Heart left ventricle (tissue), 16 donors: ENCODE measurements at regions of chr6 and their contacts with region 1.

Region 1: GRCh38 chr6:159654483-159655098 is 38.5 kb downstream of the SOD2 start:
- DNase-seq: no peak
- ATAC-seq: peak in 1 of 4 donors; percentile 51
- H3K4me3 ChIP-seq: no peak overlapping the region
- H3K27ac ChIP-seq: no peak overlapping the region
- H3K4me1 ChIP-seq: peaks cover 0 to 5% (median 0%) of the 10 kb centered on the region in 12 donors
- H3K27me3 ChIP-seq: no peaks in the 10 kb centered on the region
- CTCF ChIP-seq: peak; percentile 44 to 73 (median 58)
- POLR2A ChIP-seq: no peak

Region 2: DNA sequence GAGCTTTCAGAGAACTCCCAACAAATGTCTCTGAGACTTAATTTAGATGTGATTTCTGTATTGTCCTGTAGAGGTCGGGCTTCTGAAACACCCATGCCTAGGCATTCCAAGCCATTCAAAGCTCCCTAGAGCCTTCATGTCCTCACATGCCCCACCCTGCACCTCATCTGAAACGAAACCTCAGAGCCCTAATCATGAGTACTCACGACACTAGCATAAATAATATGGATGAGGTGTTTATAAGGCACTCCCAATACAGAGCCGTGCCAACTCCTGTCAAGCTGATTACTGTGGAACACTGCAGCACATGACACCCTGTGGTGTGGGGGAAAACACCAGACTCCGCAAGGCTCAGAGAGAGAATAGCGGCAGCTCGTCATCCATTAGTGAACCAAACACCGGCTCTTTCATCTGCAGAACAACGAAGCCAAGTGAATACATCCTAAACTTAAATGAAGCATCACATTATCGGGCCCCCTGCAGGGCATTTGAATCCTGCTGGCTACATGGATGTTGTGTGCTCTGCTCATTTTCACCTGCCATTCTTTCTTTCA is 401.6 kb before region 1 on chr6:
- intact Hi-C with region 1: loop called in 3 of 10 experiments (anchors 5 to 10 kb)
- DNase-seq: no peak
- ATAC-seq: peak in 3 of 4 donors; percentile 29 to 50 (median 44)
- H3K4me3 ChIP-seq: no peak overlapping the region
- H3K27ac ChIP-seq: no peak overlapping the region
- H3K4me1 ChIP-seq: peaks cover 0 to 13% (median 0%) of the 10 kb centered on the region in 12 donors
- H3K27me3 ChIP-seq: no peaks in the 10 kb centered on the region
- CTCF ChIP-seq: peak in 11 of 12 donors; percentile 29 to 63 (median 49)
- POLR2A ChIP-seq: no peak

Region 3: GRCh38 chr6:159874435-159874834 is 219.8 kb after region 1 on chr6:
- intact Hi-C with region 1: no loop called
- DNase-seq: peak; percentile 51 to 80 (median 57)
- ATAC-seq: peak in 3 of 4 donors; percentile 44 to 71 (median 63)
- H3K4me3 ChIP-seq: no peak overlapping the region
- H3K27ac ChIP-seq: no peak overlapping the region
- H3K4me1 ChIP-seq: peaks cover 0 to 8% (median 0%) of the 10 kb centered on the region in 12 donors
- H3K27me3 ChIP-seq: no peaks in the 10 kb centered on the region
- CTCF ChIP-seq: no peak
- POLR2A ChIP-seq: no peak